MCF 10A (cell line): ENCODE measurements at regions of chr11 and their contacts with region 1.

Region 1: DNA sequence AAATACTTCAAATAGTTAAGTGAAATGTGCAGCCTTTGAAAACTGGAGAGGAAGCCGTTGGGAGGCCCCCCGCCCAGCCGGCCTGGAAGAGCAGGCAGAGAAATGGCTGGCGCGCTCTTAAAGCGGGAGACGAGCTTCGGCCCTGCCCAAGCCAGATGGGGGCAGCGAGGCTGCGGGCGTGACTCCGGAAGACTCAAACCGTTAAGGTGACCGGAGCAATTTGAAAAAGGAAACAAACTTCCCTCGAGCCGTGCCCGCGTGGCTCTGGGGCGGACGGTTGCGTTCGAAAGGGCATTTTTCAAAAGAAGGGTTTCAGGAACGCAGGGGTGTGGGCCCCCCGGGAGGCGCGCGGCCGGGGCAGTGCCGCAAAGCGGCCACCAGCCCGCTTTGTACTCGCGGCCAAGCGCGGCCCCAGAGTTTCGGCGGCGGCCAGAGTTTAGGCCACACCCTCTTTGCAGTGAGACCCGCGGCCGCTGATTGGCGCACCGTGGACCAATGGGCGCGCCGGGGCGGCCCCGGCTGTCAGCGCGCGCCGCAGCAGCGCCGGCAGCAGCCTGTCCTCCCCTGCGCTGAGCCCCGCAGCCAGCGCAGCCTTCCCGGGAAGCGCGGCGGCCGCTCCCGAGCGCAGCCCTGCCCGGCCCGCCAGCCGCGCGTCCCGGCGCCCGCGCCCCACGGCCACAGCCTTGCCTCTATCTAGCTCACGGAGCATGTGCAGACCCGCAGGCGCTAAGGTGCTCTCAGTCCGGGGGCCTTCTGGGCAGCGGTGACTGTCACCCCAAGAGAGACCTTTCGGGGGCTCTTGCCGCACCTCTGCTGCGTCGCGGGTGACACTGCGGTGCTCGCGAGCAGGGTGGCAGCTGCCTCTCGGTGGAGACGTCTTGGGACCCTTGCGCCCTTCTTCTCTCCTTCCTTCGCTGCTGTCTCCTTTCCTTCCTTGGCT is at the start of gene NAV2:
- DNase-seq: peak; percentile 94
- H3K4me3 Mint-ChIP-seq: peak within 1 kb of the TSS; percentile 85
- H3K27ac Mint-ChIP-seq: peak within 1 kb of the TSS; percentile 94
- H3K4me1 Mint-ChIP-seq: peaks cover 34% of the 10 kb centered on the region
- H3K27me3 Mint-ChIP-seq: no peaks in the 10 kb centered on the region
- CTCF ChIP-seq: no peak
- total RNA-seq, gene NAV2: 116 and 139 TPM in 2 replicates

Region 2: DNA sequence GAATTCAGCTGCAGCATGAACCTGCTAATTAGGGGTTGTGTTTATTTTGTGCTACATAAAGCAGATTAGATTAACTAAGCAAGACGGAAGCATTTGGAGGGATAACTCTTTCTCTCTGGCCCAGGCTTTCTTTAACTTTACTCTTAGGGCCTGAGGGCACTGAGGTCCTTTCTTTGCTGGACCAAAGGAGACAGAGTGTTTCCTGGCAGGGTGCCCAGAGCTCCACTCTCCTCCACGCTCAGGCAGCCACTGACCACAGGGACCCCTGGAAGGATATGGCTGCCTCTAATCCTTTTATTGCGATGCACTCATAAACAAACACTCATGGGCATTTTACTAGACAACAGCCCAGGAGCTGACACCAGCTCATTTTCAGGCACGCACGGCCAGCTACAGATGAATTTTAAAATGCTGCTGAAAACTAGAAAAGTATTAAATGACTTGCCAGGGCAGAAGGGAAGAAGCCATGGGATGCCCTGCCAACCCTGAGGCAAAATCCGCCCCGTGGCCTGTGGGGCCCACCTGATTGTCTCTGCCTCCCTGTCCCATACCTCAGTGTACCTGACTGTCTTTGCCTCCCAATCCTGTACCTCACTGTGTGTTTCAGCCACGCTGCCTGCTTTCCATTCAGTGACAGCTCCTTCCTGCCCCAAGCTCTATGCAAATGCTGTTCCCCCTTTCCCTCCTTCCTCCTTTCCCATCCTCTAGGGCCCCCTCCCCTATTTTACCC is 192.5 kb before region 1 on chr11:
- CTCF ChIA-PET with region 1: no interaction called
- POLR2A ChIA-PET with region 1: no interaction called
- intact Hi-C with region 1: no loop called
- DNase-seq: no peak
- H3K4me3 Mint-ChIP-seq: no peak overlapping the region
- H3K27ac Mint-ChIP-seq: no peak overlapping the region
- H3K4me1 Mint-ChIP-seq: no peaks in the 10 kb centered on the region
- H3K27me3 Mint-ChIP-seq: peaks cover 68% of the 10 kb centered on the region
- CTCF ChIP-seq: no peak

Region 3: DNA sequence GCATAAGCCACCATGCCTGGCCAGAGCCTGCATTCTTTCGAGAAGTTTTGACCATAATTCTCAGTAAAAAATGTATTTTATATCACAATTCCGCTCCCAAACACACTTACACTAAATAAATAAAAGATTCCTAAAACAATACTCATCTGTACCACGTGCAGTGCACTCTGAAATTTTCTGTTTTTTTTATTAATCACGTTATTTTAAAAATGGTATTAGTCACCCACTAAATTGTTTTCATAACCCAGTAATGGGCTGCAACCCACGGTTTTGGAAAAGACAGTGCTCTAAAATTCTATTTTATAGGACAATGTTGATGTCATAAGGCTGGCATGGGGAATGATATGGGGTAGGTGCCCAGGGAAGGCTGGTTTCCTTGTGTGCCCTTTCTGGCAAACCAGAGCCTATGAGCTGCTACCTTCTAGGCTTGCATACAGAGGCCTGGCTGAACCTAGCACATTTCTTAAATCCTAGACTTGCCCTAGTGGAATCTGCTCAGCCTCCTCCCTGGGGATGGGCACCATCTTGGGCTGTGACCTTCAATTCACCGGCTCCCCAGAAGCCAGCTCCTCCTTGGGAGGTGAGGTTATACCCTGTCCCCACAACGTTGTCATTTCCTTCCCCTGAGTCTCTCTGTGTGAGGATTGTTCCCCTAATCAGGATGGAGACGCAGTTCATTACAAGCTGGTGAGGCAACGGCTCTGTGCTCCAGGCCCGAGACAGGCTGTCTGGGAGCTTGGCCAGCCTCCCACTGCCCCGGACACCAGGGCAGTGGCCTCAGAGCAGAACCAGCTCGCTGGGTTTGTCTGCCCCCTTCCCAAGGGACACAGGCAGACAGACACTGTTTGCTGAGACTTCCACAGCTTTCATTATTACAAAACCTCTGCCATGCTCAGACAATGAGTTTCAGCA is 116.5 kb before region 1 on chr11:
- CTCF ChIA-PET with region 1: no interaction called
- POLR2A ChIA-PET with region 1: no interaction called
- intact Hi-C with region 1: loop called (anchors 10 kb)
- DNase-seq: peak; percentile 94
- H3K4me3 Mint-ChIP-seq: peak overlapping the region; percentile 23
- H3K27ac Mint-ChIP-seq: peak overlapping the region; percentile 92
- H3K4me1 Mint-ChIP-seq: peaks cover 39% of the 10 kb centered on the region
- H3K27me3 Mint-ChIP-seq: no peaks in the 10 kb centered on the region
- CTCF ChIP-seq: no peak

Region 4: GRCh38 chr11:19660076-19660475 is 52.5 kb before region 1 on chr11:
- CTCF ChIA-PET with region 1: interaction called, 6 read pairs
- POLR2A ChIA-PET with region 1: interaction called, 3 read pairs
- intact Hi-C with region 1: loop called (anchors 5 kb)
- DNase-seq: peak; percentile 94
- H3K4me3 Mint-ChIP-seq: no peak overlapping the region
- H3K27ac Mint-ChIP-seq: peak overlapping the region; percentile 73
- H3K4me1 Mint-ChIP-seq: peaks cover 18% of the 10 kb centered on the region
- H3K27me3 Mint-ChIP-seq: no peaks in the 10 kb centered on the region
- CTCF ChIP-seq: no peak

Region 5: DNA sequence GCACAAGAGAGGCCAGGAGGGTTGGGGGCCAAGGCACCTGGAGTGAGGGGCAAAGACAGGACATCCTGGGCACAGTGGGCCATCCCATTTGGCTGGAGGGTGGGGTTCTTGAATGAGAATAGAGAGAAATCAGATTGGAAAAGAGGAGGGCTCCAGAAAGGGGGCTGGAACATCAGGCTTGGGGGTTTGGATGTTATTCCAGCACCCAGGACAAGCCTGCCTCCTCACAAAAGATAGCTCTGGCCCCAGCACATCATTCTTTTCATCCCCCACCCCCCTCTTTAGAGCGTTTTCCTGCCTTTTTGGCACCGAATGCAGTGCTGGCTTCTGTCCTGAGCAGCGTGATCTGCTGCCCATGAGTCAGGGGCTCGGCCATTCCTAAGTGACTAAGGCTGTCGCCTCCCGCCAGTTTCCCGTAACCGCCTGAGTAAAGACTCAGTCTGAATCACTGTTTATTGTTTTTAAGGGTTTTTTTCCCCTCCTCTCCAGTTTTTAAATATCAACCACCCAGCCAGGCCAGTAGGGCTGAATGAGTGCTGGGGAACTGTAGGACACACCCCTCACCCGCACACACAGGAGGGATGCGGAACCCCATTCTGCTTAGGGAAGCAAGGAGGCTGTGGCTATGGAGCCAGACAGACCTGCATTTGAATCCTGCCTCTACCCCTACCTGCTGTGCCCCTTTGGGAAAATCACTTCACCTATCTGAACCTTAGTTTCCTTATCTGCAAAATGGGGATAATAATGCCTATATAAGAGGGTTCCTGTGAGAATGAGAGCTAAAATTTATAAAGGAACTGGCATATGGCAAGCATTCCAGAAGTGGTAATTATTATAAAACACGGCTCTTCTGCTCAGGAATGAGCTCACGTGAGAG is 32.4 kb before region 1 on chr11:
- CTCF ChIA-PET with region 1: interaction called, 4 read pairs
- POLR2A ChIA-PET with region 1: interaction called, 7 read pairs
- intact Hi-C with region 1: loop called (anchors 1 kb)
- DNase-seq: peak; percentile 97
- H3K4me3 Mint-ChIP-seq: peak overlapping the region; percentile 38
- H3K27ac Mint-ChIP-seq: peak overlapping the region; percentile 80
- H3K4me1 Mint-ChIP-seq: peaks cover 41% of the 10 kb centered on the region
- H3K27me3 Mint-ChIP-seq: no peaks in the 10 kb centered on the region
- CTCF ChIP-seq: no peak

Region 6: GRCh38 chr11:19723572-19724342 is 11.2 kb after region 1 on chr11:
- CTCF ChIA-PET with region 1: interaction called, 4 read pairs
- POLR2A ChIA-PET with region 1: interaction called, 18 read pairs
- intact Hi-C with region 1: no loop called
- DNase-seq: peak; percentile 67
- H3K4me3 Mint-ChIP-seq: no peak overlapping the region
- H3K27ac Mint-ChIP-seq: peak overlapping the region; percentile 63
- H3K4me1 Mint-ChIP-seq: peaks cover 41% of the 10 kb centered on the region
- H3K27me3 Mint-ChIP-seq: no peaks in the 10 kb centered on the region
- CTCF ChIP-seq: no peak

Region 7: DNA sequence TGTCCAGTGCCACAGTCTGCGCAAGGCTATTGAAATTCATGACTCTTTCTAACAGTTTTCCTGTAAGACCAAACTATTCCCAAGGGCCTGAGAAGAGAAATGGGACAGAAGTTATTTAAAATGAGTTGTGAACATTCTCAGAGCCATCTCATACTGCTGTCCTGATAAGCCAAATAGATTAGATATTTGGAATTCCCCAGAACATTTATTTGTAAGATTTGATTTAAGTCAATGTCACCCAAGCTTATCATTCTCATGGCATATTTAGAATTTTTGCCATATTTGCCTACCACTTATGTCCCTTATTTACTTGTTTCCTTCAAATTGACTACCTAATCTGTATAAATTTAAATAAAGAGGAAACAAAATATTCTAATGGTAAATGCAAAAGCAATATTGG is 82.5 kb after region 1 on chr11:
- CTCF ChIA-PET with region 1: no interaction called
- POLR2A ChIA-PET with region 1: no interaction called
- intact Hi-C with region 1: no loop called
- DNase-seq: no peak
- H3K4me3 Mint-ChIP-seq: no peak overlapping the region
- H3K27ac Mint-ChIP-seq: no peak overlapping the region
- H3K4me1 Mint-ChIP-seq: peaks cover 4% of the 10 kb centered on the region
- H3K27me3 Mint-ChIP-seq: no peaks in the 10 kb centered on the region
- CTCF ChIP-seq: no peak

Region 8: GRCh38 chr11:20451568-20451967 is 739.0 kb after region 1 on chr11:
- CTCF ChIA-PET with region 1: no interaction called
- POLR2A ChIA-PET with region 1: no interaction called
- intact Hi-C with region 1: no loop called
- DNase-seq: peak; percentile 76
- H3K4me3 Mint-ChIP-seq: no peak overlapping the region
- H3K27ac Mint-ChIP-seq: no peak overlapping the region
- H3K4me1 Mint-ChIP-seq: no peaks in the 10 kb centered on the region
- H3K27me3 Mint-ChIP-seq: no peaks in the 10 kb centered on the region
- CTCF ChIP-seq: no peak